ENCODE measurements at regions of chr1 and their contacts with region 1.

Region 1: GRCh38 chr1:220879076-220879508 is at the start of gene HLX:
- DNase-seq: peak; percentile 56
- ATAC-seq: peak; percentile 91
- H3K4me3 ChIP-seq: peak within 1 kb of the TSS; percentile 58 to 75
- H3K27ac ChIP-seq: peak within 1 kb of the TSS; percentile 36; the same call in 1 of the 2 replicates
- H3K4me1 ChIP-seq: peaks cover 3 to 11% of the 10 kb centered on the region in 2 experiments; a peak in 3 of 4 replicates
- H3K27me3 ChIP-seq: no peaks in the 10 kb centered on the region
- CTCF ChIP-seq: no peak
- POLR2A ChIP-seq: peak; percentile 34
- RAD21 ChIP-seq: no peak
- total RNA-seq, gene HLX: 1.8 TPM

Region 2: GRCh38 chr1:220353229-220354012 is 525.7 kb before region 1 on chr1:
- CTCF ChIA-PET with region 1: no interaction called
- POLR2A ChIA-PET with region 1: no interaction called
- RAD21 ChIA-PET with region 1: no interaction called
- intact Hi-C with region 1: no loop called
- DNase-seq: no peak
- ATAC-seq: peak; percentile 85
- H3K4me3 ChIP-seq: no peak overlapping the region
- H3K27ac ChIP-seq: no peak overlapping the region
- H3K4me1 ChIP-seq: no peaks in the 10 kb centered on the region
- H3K27me3 ChIP-seq: no peaks in the 10 kb centered on the region
- CTCF ChIP-seq: peak in 2 of 3 experiments; percentile 22 to 33; a peak in 3 of 6 replicates
- POLR2A ChIP-seq: no peak
- RAD21 ChIP-seq: no peak

Region 3: GRCh38 chr1:221419513-221420088 is 540.5 kb after region 1 on chr1:
- CTCF ChIA-PET with region 1: no interaction called
- POLR2A ChIA-PET with region 1: no interaction called
- RAD21 ChIA-PET with region 1: no interaction called
- intact Hi-C with region 1: loop called (anchors 5 kb)
- DNase-seq: no peak
- ATAC-seq: no peak
- H3K4me3 ChIP-seq: no peak overlapping the region
- H3K27ac ChIP-seq: no peak overlapping the region
- H3K4me1 ChIP-seq: peaks cover 0 to 5% of the 10 kb centered on the region in 2 experiments; a peak in 1 of 4 replicates
- H3K27me3 ChIP-seq: no peaks in the 10 kb centered on the region
- CTCF ChIP-seq: no peak
- POLR2A ChIP-seq: no peak
- RAD21 ChIP-seq: no peak

Region 4: DNA sequence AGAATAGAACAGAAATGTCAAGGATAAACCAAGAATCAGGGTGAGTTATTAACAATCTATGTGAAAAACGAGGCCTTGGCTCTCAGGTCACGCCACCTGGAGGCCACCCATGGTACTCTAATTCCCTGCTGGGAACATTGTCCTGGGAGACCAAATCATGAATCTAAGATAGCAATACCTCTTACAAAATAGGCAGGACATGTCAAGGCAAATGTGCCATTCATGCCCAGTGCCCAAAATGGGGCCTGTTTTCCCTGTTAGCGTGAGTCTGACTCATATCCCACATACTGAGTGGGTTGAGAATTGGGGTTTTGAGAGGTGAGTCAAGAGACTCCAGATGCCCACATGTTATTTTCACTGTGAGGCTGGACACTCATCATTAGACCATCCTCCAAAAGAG is 1288.0 kb after region 1 on chr1:
- CTCF ChIA-PET with region 1: no interaction called
- POLR2A ChIA-PET with region 1: no interaction called
- RAD21 ChIA-PET with region 1: no interaction called
- intact Hi-C with region 1: loop called (anchors 10 kb)
- DNase-seq: peak; percentile 35
- ATAC-seq: peak; percentile 80
- H3K4me3 ChIP-seq: no peak overlapping the region
- H3K27ac ChIP-seq: no peak overlapping the region
- H3K4me1 ChIP-seq: 0 out of 4 replicates have a peak, but pooled peaks cover 0 to 3% of the 10 kb centered on the region in 2 experiments
- H3K27me3 ChIP-seq: no peaks in the 10 kb centered on the region
- CTCF ChIP-seq: peak; percentile 47 to 85 (median 79); a peak in 5 of 6 replicates
- POLR2A ChIP-seq: no peak
- RAD21 ChIP-seq: peak; percentile 63